ENCODE measurements at regions of chr14 and their contacts with region 1.

Region 1: GRCh38 chr14:20413045-20413799 is at the start of gene TEP1:
- DNase-seq: peak; percentile 85
- H3K4me3 Mint-ChIP-seq: peak within 1 kb of the TSS; percentile 94
- H3K27ac Mint-ChIP-seq: peak within 1 kb of the TSS; percentile 90
- H3K4me1 Mint-ChIP-seq: peaks cover 48% of the 10 kb centered on the region
- H3K27me3 Mint-ChIP-seq: no peaks in the 10 kb centered on the region

Region 2: DNA sequence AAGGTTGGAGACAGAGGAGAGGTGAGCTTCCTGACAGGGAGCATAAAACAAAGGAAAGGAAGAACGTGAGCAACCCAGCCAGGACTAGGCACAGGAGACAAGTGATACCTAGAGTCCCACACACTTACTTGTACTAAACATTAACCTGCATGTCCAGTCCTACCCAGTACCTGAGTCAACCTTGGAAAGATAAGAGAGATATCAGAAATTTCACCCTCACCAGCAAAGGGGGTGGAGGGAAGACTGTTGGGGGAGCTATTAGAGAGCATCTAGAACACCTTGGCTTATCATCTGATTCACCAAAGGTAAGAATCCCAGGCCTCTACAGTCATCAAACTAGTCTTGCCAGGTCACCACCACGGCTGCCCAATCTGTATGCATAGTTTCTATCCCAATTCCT is 11.6 kb after region 1 on chr14:
- CTCF ChIA-PET with region 1: interaction called, 20 read pairs
- DNase-seq: no peak
- H3K4me3 Mint-ChIP-seq: no peak overlapping the region
- H3K27ac Mint-ChIP-seq: no peak overlapping the region
- H3K4me1 Mint-ChIP-seq: peaks cover 34% of the 10 kb centered on the region
- H3K27me3 Mint-ChIP-seq: no peaks in the 10 kb centered on the region

Region 3: GRCh38 chr14:20454516-20455354 is 41.5 kb after region 1 on chr14 and contains the starts of genes APEX1 and OSGEP:
- CTCF ChIA-PET with region 1: interaction called, 20 read pairs
- DNase-seq: peak; percentile 99
- H3K4me3 Mint-ChIP-seq: peak within 1 kb of the TSS; percentile 36
- H3K27ac Mint-ChIP-seq: no peak within 1 kb of the TSS
- H3K4me1 Mint-ChIP-seq: peaks cover 28% of the 10 kb centered on the region
- H3K27me3 Mint-ChIP-seq: no peaks in the 10 kb centered on the region

Region 4: GRCh38 chr14:20461274-20462001 is 48.2 kb after region 1 on chr14 and contains the start of gene PIP4P1:
- CTCF ChIA-PET with region 1: interaction called, 20 read pairs
- DNase-seq: peak; percentile 98
- H3K4me3 Mint-ChIP-seq: peak within 1 kb of the TSS; percentile 96
- H3K27ac Mint-ChIP-seq: peak within 1 kb of the TSS; percentile 91
- H3K4me1 Mint-ChIP-seq: peaks cover 39% of the 10 kb centered on the region
- H3K27me3 Mint-ChIP-seq: peaks cover 4% of the 10 kb centered on the region

Region 5: DNA sequence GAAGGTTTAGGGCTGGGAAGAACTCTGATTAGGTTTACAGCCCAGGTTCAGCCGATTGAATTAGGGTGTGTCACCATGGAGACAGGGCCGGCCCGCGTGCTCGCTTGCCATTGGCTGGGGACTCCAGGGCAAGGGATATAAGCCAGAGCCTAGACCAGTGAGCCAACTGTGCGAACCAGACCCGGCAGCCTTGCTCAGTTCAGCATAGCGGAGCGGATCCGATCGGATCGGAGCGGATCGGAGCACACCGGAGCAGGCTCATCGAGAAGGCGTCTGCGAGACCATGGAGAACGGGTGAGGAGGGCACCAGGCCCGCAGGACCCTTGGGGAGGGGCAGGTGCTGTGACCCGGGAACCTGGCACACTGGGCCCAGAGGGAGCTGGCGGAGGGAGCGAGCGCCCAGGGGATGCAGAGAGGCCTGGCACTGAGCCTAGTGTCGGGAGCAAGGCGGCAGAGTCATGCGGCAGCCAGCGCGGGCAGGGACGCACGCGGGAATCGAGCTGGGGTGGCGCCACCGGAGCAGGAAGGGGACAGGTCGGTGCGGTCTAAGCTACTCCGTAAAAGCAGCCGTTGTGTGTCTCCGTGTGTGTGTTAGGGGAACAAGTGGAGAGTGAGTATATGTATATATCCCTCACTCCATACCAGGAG is 56.1 kb after region 1 on chr14 and contains the start of gene PNP:
- CTCF ChIA-PET with region 1: interaction called, 13 read pairs
- DNase-seq: peak; percentile 93
- H3K4me3 Mint-ChIP-seq: peak within 1 kb of the TSS; percentile 88
- H3K27ac Mint-ChIP-seq: peak within 1 kb of the TSS; percentile 95
- H3K4me1 Mint-ChIP-seq: peaks cover 39% of the 10 kb centered on the region
- H3K27me3 Mint-ChIP-seq: peaks cover 3% of the 10 kb centered on the region

Region 6: GRCh38 chr14:20489093-20489994 is 76.1 kb after region 1 on chr14:
- CTCF ChIA-PET with region 1: interaction called, 12 read pairs
- DNase-seq: peak; percentile 42
- H3K4me3 Mint-ChIP-seq: peak overlapping the region; percentile 16
- H3K27ac Mint-ChIP-seq: peak overlapping the region; percentile 81
- H3K4me1 Mint-ChIP-seq: peaks cover 68% of the 10 kb centered on the region
- H3K27me3 Mint-ChIP-seq: no peaks in the 10 kb centered on the region